ENCODE measurements at regions of chr19 and their contacts with region 1.

Region 1: GRCh38 chr19:49546825-49547565 is 19.2 kb downstream of the RCN3 start:
- DNase-seq: peak; percentile 42
- ATAC-seq: peak; percentile 85
- H3K4me3 ChIP-seq: no peak overlapping the region
- H3K27ac ChIP-seq: no peak overlapping the region
- H3K4me1 ChIP-seq: no peaks in the 10 kb centered on the region
- H3K27me3 ChIP-seq: no peaks in the 10 kb centered on the region
- CTCF ChIP-seq: peak; percentile 75 to 90 (median 86)
- EP300 ChIP-seq: no peak
- POLR2A ChIP-seq: no peak
- RAD21 ChIP-seq: peak; percentile 91

Region 2: GRCh38 chr19:49502866-49503581 is 44.0 kb before region 1 on chr19:
- CTCF ChIA-PET with region 1: interaction called, 8 read pairs
- POLR2A ChIA-PET with region 1: interaction called, 7 read pairs
- RAD21 ChIA-PET with region 1: interaction called, 27 read pairs
- SMC1A ChIA-PET with region 1: interaction called, 70 read pairs
- in situ Hi-C with region 1: loop called (anchors 5 kb)
- intact Hi-C with region 1: loop called (anchors 1 kb)
- DNase-seq: no peak
- ATAC-seq: peak; percentile 16; the same call in 1 of the 3 replicates
- H3K4me3 ChIP-seq: no peak overlapping the region
- H3K27ac ChIP-seq: no peak overlapping the region
- H3K4me1 ChIP-seq: peaks cover 30% of the 10 kb centered on the region
- H3K27me3 ChIP-seq: no peaks in the 10 kb centered on the region
- CTCF ChIP-seq: peak; percentile 44 to 56 (median 51)
- EP300 ChIP-seq: no peak
- POLR2A ChIP-seq: no peak
- RAD21 ChIP-seq: peak; percentile 55

Region 3: GRCh38 chr19:49533551-49534488 is 13.2 kb before region 1 on chr19:
- CTCF ChIA-PET with region 1: interaction called, 20 read pairs
- POLR2A ChIA-PET with region 1: interaction called, 4 read pairs
- RAD21 ChIA-PET with region 1: interaction called, 10 read pairs
- SMC1A ChIA-PET with region 1: interaction called, 12 read pairs
- in situ Hi-C with region 1: no loop called
- intact Hi-C with region 1: no loop called
- DNase-seq: peak; percentile 19
- ATAC-seq: peak; percentile 95
- H3K4me3 ChIP-seq: peak overlapping the region; percentile 68
- H3K27ac ChIP-seq: no peak overlapping the region
- H3K4me1 ChIP-seq: peaks cover 10% of the 10 kb centered on the region
- H3K27me3 ChIP-seq: peaks cover 2 to 4% of the 10 kb centered on the region in 2 experiments; a peak in 3 of 4 replicates
- CTCF ChIP-seq: peak; percentile 7 to 42 (median 37); a peak in 4 of 6 replicates
- EP300 ChIP-seq: no peak
- POLR2A ChIP-seq: no peak
- RAD21 ChIP-seq: no peak

Region 4: DNA sequence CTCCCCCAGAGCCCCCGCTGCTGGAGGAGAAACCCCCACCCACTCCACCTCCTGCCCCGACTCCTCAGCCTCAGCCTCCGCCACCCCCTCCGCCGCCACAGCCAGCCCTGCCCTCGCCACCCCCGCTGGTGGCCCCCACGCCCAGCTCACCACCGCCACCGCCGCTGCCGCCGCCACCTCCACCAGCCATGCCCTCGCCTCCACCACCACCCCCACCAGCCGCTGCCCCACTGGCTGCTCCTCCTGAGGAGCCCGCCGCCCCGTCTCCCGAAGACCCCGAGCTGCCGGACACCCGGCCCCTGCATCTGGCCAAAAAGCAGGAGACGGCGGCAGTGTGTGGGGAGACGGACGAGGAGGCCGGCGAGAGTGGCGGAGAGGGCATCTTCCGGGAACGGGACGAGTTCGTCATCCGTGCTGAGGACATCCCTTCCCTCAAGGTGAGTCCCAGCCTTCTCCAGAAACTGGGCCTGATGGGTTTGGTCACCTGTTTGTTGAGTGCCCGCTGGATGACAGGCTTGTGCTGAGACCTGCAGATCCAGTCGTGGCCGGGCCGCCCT is 54.6 kb after region 1 on chr19:
- CTCF ChIA-PET with region 1: no interaction called
- POLR2A ChIA-PET with region 1: no interaction called
- RAD21 ChIA-PET with region 1: no interaction called
- SMC1A ChIA-PET with region 1: no interaction called
- in situ Hi-C with region 1: no loop called
- intact Hi-C with region 1: no loop called
- DNase-seq: no peak
- ATAC-seq: no peak
- H3K4me3 ChIP-seq: no peak overlapping the region
- H3K27ac ChIP-seq: no peak overlapping the region
- H3K4me1 ChIP-seq: no peaks in the 10 kb centered on the region
- H3K27me3 ChIP-seq: no peaks in the 10 kb centered on the region
- CTCF ChIP-seq: no peak
- EP300 ChIP-seq: no peak
- POLR2A ChIP-seq: 0 out of 2 replicates have a peak, but pooled peaks have one; percentile 36
- RAD21 ChIP-seq: no peak